ENCODE measurements at regions of chr15 and their contacts with region 1.

Region 1: DNA sequence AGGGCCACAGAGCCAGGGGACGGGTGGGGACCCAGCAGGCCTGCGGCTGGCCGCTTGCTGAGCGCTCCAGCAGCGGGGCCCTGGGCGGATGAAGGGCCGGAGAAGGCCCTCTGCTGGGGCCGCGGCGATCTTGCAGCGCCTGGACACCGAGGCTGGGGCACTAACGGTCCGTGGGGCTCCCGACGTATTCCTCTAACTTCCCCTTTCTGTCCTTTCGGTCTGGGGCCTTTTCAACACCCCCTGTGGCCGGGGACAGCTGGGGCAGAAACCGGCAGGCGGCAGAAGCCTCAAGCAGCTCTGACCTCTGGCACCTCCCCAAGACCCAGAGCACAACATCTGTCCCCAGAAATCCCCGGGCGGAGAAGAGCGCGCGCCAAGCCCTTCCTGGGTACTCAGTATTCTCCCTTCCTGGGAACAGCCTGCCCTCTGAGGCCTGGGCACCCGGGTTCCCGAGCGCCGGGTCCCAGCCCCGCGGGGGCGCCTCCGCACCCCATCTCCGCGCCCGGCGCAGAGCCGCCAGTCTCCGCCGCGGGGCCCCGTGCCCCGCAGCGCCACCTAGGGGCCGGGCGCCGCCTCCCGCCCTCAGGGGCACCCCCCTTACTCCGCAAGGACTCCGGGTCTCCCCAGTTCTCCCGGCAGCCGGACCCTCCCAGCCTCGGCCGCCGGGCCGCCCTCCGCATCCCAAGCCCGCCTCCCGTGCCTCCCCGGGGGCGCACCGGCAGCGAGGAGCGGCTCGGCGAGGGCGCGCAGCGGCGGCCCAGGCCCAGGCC is 582 bp upstream of the SLCO3A1 start:
- DNase-seq: peak; percentile 88
- H3K4me3 ChIP-seq: peak overlapping the region; percentile 44 to 75 (median 64)
- H3K27ac ChIP-seq: peak overlapping the region; percentile 88 to 93 (median 90)
- H3K4me1 ChIP-seq: peaks cover 0 to 25% (median 23%) of the 10 kb centered on the region in 4 donors
- H3K27me3 ChIP-seq: no peaks in the 10 kb centered on the region
- CTCF ChIP-seq: peak; percentile 47 to 73 (median 56)
- EP300 ChIP-seq: no peak
- POLR2A ChIP-seq: no peak

Region 2: DNA sequence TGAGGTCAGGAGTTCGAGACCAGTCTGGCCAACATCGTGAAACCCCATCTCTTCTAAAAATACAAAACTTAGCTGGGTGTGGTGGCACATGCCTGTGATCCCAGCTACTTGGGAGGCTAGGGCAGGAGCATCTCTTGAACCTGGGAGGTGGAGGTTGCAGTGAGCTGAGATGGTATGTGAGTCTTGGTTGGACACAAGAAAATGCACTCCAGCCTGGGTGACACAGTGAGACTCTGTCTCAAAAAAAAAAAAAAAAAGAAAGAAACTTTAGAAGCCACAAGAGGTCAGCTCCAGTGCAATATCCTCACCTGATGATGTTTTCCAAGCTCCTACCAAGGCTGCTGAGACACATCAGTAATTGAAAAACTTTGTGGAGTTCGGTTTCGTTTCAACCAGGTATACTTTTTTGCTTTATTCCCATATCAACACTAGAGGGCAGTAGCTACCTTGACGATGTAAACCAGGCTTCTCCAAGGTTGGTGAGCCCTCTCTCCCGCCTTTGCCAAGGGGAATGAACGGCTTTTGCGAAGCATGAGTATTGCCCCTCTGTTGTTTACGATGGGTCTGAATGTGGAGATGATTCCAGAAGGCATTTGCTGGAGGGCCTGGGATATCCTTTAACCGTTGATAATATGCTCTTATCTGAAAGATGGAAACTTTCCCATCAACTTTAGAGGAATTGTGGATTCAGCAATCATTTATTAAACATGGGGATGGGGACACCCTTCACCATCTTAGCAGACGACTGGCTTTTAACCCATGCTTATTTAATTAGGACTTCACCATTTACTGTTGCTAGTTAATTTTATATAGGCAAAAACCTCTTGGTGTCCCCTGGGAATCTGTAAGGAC is 550.1 kb before region 1 on chr15:
- intact Hi-C with region 1: loop called (anchors 2 kb)
- DNase-seq: no peak
- H3K4me3 ChIP-seq: no peak overlapping the region
- H3K27ac ChIP-seq: no peak overlapping the region
- H3K4me1 ChIP-seq: peaks cover 0 to 8% (median 2%) of the 10 kb centered on the region in 4 donors
- H3K27me3 ChIP-seq: peaks cover 0 to 20% (median 13%) of the 10 kb centered on the region in 3 donors
- CTCF ChIP-seq: peak; percentile 39 to 67 (median 62)
- EP300 ChIP-seq: no peak
- POLR2A ChIP-seq: no peak

Region 3: DNA sequence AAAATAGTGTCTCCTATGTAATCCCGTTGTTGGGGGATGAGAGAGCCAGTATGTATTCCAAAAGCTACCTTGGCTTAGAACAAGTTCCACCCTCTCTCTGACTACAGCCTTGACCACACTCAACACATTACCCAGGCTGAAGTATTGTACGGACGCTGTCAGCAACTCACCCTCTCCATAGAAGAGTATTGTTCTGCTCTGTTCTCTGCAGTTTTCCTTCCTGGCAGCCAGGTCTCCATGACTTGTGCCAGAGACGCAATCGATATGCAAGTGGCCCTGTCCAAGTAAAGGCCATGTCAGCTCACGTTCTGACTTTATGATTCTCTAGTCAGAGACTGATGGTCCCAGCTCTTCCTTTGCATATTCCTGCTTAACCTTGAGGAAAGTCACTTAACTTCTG is 163.5 kb before region 1 on chr15:
- intact Hi-C with region 1: no loop called
- DNase-seq: no peak
- H3K4me3 ChIP-seq: no peak overlapping the region
- H3K27ac ChIP-seq: no peak overlapping the region
- H3K4me1 ChIP-seq: peaks cover 0 to 3% (median 0%) of the 10 kb centered on the region in 4 donors
- H3K27me3 ChIP-seq: peaks cover 0 to 7% (median 0%) of the 10 kb centered on the region in 3 donors
- CTCF ChIP-seq: no peak
- EP300 ChIP-seq: no peak
- POLR2A ChIP-seq: no peak

Region 4: DNA sequence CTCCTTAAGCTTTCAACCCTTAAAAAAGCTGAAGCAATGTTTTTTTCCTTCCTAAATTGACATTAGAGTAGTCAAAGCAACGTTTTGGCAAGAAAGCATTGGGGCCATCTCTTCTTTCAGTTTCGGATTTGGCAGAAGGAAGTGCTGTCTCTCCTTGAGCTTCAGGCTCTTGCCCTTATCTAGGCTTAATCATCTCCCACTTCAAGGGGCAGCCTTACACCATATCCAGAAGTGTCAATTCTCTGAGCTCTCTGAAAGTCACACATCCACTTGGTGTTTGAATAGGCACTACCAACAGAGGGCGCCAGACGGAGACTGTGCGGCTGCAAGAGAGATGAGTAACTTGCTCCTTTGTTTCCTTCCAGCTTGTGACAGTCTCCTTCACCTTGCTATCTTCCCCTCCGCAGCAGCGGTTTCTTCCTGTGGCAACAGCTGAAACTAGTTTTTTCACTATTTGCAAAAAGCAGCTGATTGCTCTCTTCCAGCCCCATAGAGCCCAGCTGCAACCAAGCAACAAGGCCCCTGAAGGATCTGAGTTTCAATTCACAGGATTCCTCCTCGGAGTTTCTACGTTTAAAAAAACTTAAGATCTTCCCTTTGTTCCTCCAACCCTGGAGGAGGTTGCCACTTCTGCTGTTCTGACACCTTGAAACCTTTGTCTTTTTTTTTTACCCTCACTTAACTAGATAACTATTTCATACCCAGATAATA is 146.4 kb before region 1 on chr15:
- intact Hi-C with region 1: loop called (anchors 2 kb)
- DNase-seq: peak; percentile 87
- H3K4me3 ChIP-seq: no peak overlapping the region
- H3K27ac ChIP-seq: peak overlapping the region in 2 of 4 donors; percentile 20 to 41
- H3K4me1 ChIP-seq: no peaks in the 10 kb centered on the region
- H3K27me3 ChIP-seq: no peaks in the 10 kb centered on the region
- CTCF ChIP-seq: peak; percentile 29 to 68 (median 55)
- EP300 ChIP-seq: no peak
- POLR2A ChIP-seq: no peak

Region 5: DNA sequence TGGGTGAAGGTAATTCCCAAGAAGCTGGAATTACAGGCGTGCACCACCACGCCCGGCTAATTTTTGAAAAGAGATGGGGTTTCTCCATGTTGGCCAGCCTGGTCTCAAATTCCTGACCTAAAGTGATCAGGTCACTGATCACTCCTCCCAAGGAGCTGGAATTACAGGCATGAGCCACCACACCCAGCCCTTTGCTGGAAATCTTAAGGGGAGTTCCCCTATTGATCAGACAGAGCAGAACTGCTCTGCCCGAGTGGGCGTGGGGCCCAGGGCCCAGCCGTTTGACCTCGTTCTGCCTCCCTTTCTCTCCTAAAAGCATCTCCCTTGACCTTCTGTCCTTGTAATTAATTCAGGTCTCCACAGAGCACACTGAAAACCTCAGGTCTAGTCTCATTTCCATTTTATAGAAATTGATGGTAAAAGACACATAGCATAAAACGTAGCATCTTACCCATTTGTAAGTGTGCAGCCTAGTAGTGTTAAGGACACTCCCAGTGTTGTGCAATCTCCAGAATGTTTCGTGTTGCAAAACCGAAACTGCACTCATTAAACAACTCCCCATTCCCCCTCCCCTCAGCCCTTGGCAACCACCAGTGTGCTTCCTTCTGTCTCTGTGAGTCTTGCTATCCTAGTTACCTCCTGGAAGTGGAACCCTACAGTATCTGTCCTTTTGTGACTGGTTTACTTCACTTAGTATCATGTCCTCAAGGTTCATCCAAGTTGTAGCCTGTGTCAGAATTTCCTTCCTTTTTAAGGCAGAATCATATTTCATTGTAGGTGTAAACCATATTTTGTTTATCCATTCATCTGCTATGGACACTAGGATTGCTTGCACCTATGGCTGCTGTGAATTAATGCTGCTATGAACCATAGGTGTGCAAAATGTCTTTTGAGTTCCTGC is 90.0 kb after region 1 on chr15:
- intact Hi-C with region 1: loop called (anchors 5 kb)
- DNase-seq: peak; percentile 94
- H3K4me3 ChIP-seq: peak overlapping the region in 3 of 4 donors; percentile 3 to 21 (median 4)
- H3K27ac ChIP-seq: peak overlapping the region; percentile 39 to 74 (median 62)
- H3K4me1 ChIP-seq: peaks cover 0 to 29% (median 20%) of the 10 kb centered on the region in 4 donors
- H3K27me3 ChIP-seq: no peaks in the 10 kb centered on the region
- CTCF ChIP-seq: no peak
- EP300 ChIP-seq: no peak
- POLR2A ChIP-seq: no peak

Region 6: DNA sequence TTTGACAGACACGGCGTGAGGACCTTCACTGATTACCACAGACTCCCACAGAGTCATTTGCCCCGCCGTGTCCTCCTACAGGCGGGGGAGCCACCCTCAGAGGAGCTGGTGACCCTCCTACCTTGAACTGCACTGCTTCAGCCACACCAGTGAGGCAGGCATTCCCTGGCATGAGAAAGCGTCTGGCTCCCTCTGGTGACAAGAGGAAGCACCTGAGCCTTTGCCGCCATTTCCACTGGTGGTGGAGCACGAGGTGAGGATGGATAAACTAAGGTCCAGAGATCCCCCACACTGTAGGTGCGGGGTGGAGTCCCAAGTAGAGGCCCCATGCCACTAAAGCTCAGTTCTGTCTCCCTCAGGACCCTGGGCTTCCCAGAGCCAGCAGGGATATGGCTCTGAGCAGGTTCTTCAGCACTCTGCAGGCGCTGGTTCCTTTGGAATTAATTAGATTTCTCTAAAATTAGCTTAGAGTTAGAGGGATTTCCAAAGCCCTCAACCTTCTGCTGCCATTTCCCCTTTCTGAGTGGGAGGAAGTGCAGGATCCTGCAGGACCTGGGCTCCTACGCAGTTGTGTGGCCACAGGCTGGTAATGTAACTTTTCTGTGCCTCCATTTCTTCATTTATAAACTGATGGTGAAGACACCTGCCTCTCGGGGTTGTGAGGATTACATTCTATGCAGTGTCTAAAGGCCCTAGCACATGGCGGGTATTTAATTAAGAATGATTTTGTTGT is 224.6 kb after region 1 on chr15:
- intact Hi-C with region 1: loop called (anchors 10 kb)
- DNase-seq: peak; percentile 79
- H3K4me3 ChIP-seq: no peak overlapping the region
- H3K27ac ChIP-seq: no peak overlapping the region
- H3K4me1 ChIP-seq: peaks cover 0 to 8% (median 3%) of the 10 kb centered on the region in 4 donors
- H3K27me3 ChIP-seq: no peaks in the 10 kb centered on the region
- CTCF ChIP-seq: peak in 3 of 4 experiments; percentile 47 to 56 (median 49)
- EP300 ChIP-seq: no peak
- POLR2A ChIP-seq: no peak

Measured in sigmoid colon (tissue), 7 donors.